AG04449 (cell line): ENCODE measurements at regions of chr4 and their contacts with region 1.

Region 1: GRCh38 chr4:72326692-72327632 is 242.1 kb downstream of the ADAMTS3 start:
- DNase-seq: peak; percentile 4
- H3K4me3 ChIP-seq: no peak overlapping the region
- CTCF ChIP-seq: peak; percentile 47

Region 2: GRCh38 chr4:72073816-72074215 is 253.1 kb before region 1 on chr4:
- CTCF ChIA-PET with region 1: no interaction called
- POLR2A ChIA-PET with region 1: no interaction called
- DNase-seq: no peak
- H3K4me3 ChIP-seq: no peak overlapping the region
- CTCF ChIP-seq: no peak

Region 3: GRCh38 chr4:72112514-72113156 is 214.3 kb before region 1 on chr4:
- CTCF ChIA-PET with region 1: no interaction called
- POLR2A ChIA-PET with region 1: no interaction called
- DNase-seq: no peak
- H3K4me3 ChIP-seq: no peak overlapping the region
- CTCF ChIP-seq: no peak

Region 4: GRCh38 chr4:72302981-72303704 is 23.8 kb before region 1 on chr4:
- CTCF ChIA-PET with region 1: interaction called, 16 read pairs
- POLR2A ChIA-PET with region 1: no interaction called
- DNase-seq: no peak
- H3K4me3 ChIP-seq: no peak overlapping the region
- CTCF ChIP-seq: peak; percentile 65

Region 5: GRCh38 chr4:72312032-72312650 is 14.8 kb before region 1 on chr4:
- CTCF ChIA-PET with region 1: interaction called, 70 read pairs
- POLR2A ChIA-PET with region 1: no interaction called
- DNase-seq: peak; percentile 81
- H3K4me3 ChIP-seq: peak overlapping the region; percentile 10; the same call in 1 of the 2 replicates
- CTCF ChIP-seq: no peak

Region 6: DNA sequence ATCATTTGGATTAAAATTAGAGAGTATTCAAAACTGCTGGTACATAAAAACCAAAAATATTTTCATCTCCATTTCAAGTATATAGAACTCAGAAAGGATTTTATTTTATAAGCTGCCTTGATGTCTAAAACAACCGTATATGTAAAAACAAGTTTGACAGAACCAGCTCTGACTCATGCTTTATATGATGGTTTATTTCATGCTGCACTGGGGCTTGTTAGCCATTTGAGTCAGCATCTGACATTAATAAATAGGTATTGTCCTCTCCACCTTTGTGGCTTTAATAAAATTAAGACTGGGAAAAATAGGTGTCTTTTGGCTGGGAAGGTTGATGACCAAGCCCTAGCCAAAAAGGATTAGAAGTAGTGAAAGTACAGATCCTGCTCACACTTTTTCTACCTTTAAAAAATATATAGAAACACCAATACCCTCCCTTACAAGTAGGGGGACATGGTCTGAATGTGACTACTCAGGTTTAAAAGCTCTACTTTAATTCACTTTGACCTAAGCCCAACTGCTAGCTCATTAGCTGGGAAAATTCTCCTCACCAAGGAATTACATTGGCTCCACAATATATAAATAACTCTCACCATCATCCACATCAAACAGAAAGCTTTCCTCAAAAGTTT is 14.0 kb after region 1 on chr4:
- CTCF ChIA-PET with region 1: interaction called, 19 read pairs
- POLR2A ChIA-PET with region 1: no interaction called
- DNase-seq: no peak
- H3K4me3 ChIP-seq: no peak overlapping the region
- CTCF ChIP-seq: no peak

Region 7: DNA sequence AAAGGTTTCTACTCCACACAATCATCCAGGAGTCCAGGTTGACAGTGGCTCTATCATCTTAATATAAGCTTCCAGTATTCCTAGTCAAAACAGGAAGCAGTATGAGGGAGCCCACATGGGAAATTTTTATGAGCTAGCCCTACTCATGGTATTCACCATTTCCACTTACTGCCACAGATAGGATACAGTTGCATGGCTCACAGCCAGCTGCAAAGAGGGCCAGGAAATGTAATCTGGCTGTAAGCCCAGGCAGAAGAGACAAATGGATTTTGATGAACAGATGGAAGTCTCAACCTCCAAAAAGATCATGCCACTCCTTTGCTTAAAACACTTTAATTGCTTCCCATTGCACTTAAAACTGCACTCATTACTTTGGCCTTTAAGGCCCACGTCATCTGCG is 91.5 kb after region 1 on chr4:
- CTCF ChIA-PET with region 1: interaction called, 14 read pairs
- POLR2A ChIA-PET with region 1: no interaction called
- DNase-seq: no peak
- H3K4me3 ChIP-seq: no peak overlapping the region
- CTCF ChIP-seq: no peak

Region 8: GRCh38 chr4:72463724-72464123 is 136.8 kb after region 1 on chr4:
- CTCF ChIA-PET with region 1: interaction called, 95 read pairs
- POLR2A ChIA-PET with region 1: no interaction called
- DNase-seq: no peak
- H3K4me3 ChIP-seq: no peak overlapping the region
- CTCF ChIP-seq: no peak

Region 9: GRCh38 chr4:72468904-72469502 is 142.0 kb after region 1 on chr4:
- CTCF ChIA-PET with region 1: interaction called, 95 read pairs
- POLR2A ChIA-PET with region 1: no interaction called
- DNase-seq: no peak
- H3K4me3 ChIP-seq: no peak overlapping the region
- CTCF ChIP-seq: peak; percentile 4